HepG2 (cell line): ENCODE measurements at regions of chr6 and their contacts with region 1.

Region 1: DNA sequence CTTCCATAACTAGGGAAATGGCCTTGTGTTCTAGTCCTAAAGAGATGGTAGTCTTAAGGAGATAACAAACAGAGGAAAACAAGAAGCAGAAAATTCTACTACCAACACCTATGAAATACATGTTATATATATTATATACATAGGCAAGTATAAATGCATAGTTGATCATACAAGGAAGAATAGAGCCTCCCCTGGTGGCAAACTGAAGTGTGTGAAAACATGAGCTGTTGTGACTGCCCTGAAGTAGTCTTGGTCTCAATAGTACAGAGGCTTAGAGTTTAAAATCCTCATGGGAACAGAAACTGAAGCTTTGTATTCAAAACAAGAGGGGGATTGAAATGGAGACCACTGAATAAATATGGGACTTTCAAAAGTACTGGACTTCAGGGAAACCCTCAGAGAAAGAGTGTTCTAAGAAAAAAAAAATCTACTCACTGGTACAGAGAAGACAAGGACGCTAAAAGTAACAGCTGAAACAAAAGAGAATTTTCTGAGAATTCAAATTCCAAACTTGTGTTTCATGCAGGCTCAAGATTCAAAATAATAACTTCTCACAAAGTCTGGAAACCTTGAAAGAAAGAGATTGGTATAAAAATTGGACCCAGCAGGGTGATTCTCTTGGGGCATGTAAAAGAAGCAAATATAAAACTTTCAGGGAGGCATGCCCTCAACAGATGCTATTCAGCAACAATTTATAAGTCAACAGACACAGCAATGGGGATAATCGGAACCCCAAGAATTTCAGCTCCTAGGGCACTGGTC is 59.7 kb upstream of the SAMD3 start:
- DNase-seq: peak; percentile 9
- ATAC-seq: peak; percentile 59; the same call in 2 of the 3 replicates
- H3K4me3 ChIP-seq: no peak overlapping the region
- H3K27ac ChIP-seq: no peak overlapping the region
- H3K4me1 ChIP-seq: no peaks in the 10 kb centered on the region
- H3K27me3 ChIP-seq: no peaks in the 10 kb centered on the region; a peak in 1 of 5 replicates
- CTCF ChIP-seq: no peak; the same call in 1 of the 2 replicates
- EP300 ChIP-seq: no peak
- POLR2A ChIP-seq: no peak
- RAD21 ChIP-seq: no peak

Region 2: GRCh38 chr6:130047088-130047995 is 235.1 kb before region 1 on chr6:
- CTCF ChIA-PET with region 1: no interaction called
- POLR2A ChIA-PET with region 1: no interaction called
- in situ Hi-C with region 1: no loop called
- intact Hi-C with region 1: loop called (anchors 10 kb)
- DNase-seq: no peak
- ATAC-seq: no peak
- H3K4me3 ChIP-seq: no peak overlapping the region
- H3K27ac ChIP-seq: no peak overlapping the region
- H3K4me1 ChIP-seq: peaks cover 9% of the 10 kb centered on the region
- H3K27me3 ChIP-seq: no peaks in the 10 kb centered on the region
- CTCF ChIP-seq: no peak
- EP300 ChIP-seq: no peak
- POLR2A ChIP-seq: no peak
- RAD21 ChIP-seq: no peak

Region 3: GRCh38 chr6:130132286-130132701 is 150.1 kb before region 1 on chr6:
- CTCF ChIA-PET with region 1: no interaction called
- POLR2A ChIA-PET with region 1: no interaction called
- in situ Hi-C with region 1: no loop called
- intact Hi-C with region 1: loop called (anchors 10 kb)
- DNase-seq: no peak
- ATAC-seq: no peak
- H3K4me3 ChIP-seq: no peak overlapping the region
- H3K27ac ChIP-seq: no peak overlapping the region
- H3K4me1 ChIP-seq: no peaks in the 10 kb centered on the region
- H3K27me3 ChIP-seq: no peaks in the 10 kb centered on the region
- CTCF ChIP-seq: no peak
- EP300 ChIP-seq: no peak
- POLR2A ChIP-seq: no peak
- RAD21 ChIP-seq: no peak

Region 4: GRCh38 chr6:130409418-130410100 is 127.1 kb after region 1 on chr6:
- CTCF ChIA-PET with region 1: no interaction called
- POLR2A ChIA-PET with region 1: no interaction called
- in situ Hi-C with region 1: no loop called
- intact Hi-C with region 1: no loop called
- DNase-seq: no peak
- ATAC-seq: no peak
- H3K4me3 ChIP-seq: no peak overlapping the region
- H3K27ac ChIP-seq: no peak overlapping the region
- H3K4me1 ChIP-seq: no peaks in the 10 kb centered on the region
- H3K27me3 ChIP-seq: no peaks in the 10 kb centered on the region
- CTCF ChIP-seq: no peak
- EP300 ChIP-seq: no peak
- POLR2A ChIP-seq: no peak
- RAD21 ChIP-seq: no peak